ENCODE measurements at regions of chr7 and their contacts with region 1.

Region 1: DNA sequence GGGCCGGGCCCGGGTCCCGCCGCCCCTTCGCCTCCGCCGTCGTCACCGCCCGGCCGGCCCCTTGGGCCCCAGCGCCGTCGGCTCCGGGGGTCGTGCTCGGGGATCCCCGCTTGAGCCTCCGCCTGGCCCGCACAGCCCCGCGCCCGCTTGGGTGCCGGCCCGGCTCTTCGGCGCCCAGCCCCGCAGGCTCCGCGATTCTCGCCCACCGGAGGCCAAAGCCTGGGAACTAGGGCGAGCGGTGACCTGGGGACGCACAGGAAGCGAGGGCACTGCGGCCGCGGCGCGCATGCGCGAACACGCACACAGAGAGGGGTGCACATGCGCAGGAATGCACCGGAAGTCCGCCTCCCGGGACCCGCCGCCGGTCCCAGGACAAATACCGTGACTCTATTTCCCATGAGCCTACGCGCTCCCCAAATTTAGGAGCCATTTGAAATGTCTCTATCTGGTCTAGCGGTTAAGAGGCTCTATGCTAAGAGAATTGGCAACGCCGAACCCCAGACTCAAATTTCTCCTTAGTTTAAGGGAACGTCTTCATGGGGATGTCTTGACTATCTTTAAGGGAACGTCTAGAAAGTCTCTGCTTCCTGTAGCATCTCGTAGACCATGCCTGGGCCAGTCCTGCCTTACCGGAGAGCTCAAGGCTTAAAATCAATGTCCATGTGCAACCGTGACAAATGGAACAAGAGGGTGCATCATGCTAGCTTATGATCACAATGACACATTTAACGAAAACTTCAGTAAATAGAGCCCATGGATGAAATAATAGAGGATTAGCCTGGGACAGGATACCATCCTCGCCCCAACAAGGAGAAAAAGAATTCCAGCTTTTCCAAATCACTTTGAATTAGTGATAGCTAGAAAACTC is at the start of gene ZNF12:
- DNase-seq: peak; percentile 99
- H3K4me3 ChIP-seq: peak within 1 kb of the TSS; percentile 90 to 100 (median 95)
- H3K27ac ChIP-seq: peak within 1 kb of the TSS; percentile 81 to 96 (median 86)
- H3K4me1 ChIP-seq: peaks cover 0 to 35% (median 25%) of the 10 kb centered on the region in 4 donors
- H3K27me3 ChIP-seq: no peaks in the 10 kb centered on the region
- CTCF ChIP-seq: no peak
- EP300 ChIP-seq: peak in 1 of 4 donors; percentile 52
- POLR2A ChIP-seq: peak; percentile 30 to 38
- total RNA-seq, gene ZNF12: 17.2 to 27.1 (median 22.9) TPM

Region 2: DNA sequence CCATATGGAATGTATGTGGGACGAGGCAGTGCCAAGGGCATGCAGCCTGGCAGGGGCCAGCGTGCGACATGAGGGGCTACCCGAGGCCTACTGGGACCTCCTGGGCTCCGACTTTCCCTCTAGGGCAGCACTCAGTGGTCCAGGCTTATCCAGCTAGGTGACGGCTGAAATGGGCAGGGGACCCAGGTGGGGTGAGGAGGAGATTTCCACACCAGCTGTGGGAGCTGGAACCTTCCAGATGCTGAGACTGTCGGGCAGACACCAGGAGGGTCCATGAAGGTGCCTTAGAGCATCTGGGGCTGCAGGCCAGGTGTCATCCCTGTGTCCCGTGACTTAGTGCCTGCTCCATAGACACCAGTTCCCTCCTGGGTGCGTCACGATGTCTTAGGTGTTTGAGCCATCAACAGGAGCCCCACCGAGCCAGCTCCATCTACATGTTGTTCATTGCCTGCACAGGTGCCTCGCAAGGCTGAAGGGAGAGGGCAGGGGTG is 56.3 kb before region 1 on chr7:
- intact Hi-C with region 1: no loop called
- DNase-seq: peak; percentile 59
- H3K4me3 ChIP-seq: no peak overlapping the region
- H3K27ac ChIP-seq: no peak overlapping the region
- H3K4me1 ChIP-seq: no peaks in the 10 kb centered on the region
- H3K27me3 ChIP-seq: no peaks in the 10 kb centered on the region
- CTCF ChIP-seq: no peak
- EP300 ChIP-seq: no peak
- POLR2A ChIP-seq: no peak

Region 3: GRCh38 chr7:6729492-6730342 is 22.8 kb after region 1 on chr7:
- intact Hi-C with region 1: loop called (anchors 2 kb)
- DNase-seq: peak; percentile 97
- H3K4me3 ChIP-seq: peak overlapping the region; percentile 67 to 99 (median 92)
- H3K27ac ChIP-seq: peak overlapping the region; percentile 83 to 91 (median 90)
- H3K4me1 ChIP-seq: peaks cover 5 to 21% (median 12%) of the 10 kb centered on the region in 4 donors
- H3K27me3 ChIP-seq: no peaks in the 10 kb centered on the region
- CTCF ChIP-seq: no peak
- EP300 ChIP-seq: no peak
- POLR2A ChIP-seq: peak in 1 of 2 donors; percentile 16

Measured in sigmoid colon (tissue), 7 donors.